Activated CD4-positive, alpha-beta T cell treated with anti-CD3 and anti-CD28 coated beads, Interleukin-2, amount 10 ng/mL, durations not matched to agents 24 days and 14 days (primary cell): ENCODE measurements at regions of chr15 and their contacts with region 1.

Region 1: GRCh38 chr15:43939070-43939469 is 112.3 kb downstream of the WDR76 start:
- DNase-seq: no peak
- H3K4me3 Mint-ChIP-seq: no peak overlapping the region
- H3K27ac Mint-ChIP-seq: no peak overlapping the region
- H3K4me1 Mint-ChIP-seq: no peaks in the 10 kb centered on the region
- H3K27me3 Mint-ChIP-seq: peaks cover 9% of the 10 kb centered on the region

Region 2: DNA sequence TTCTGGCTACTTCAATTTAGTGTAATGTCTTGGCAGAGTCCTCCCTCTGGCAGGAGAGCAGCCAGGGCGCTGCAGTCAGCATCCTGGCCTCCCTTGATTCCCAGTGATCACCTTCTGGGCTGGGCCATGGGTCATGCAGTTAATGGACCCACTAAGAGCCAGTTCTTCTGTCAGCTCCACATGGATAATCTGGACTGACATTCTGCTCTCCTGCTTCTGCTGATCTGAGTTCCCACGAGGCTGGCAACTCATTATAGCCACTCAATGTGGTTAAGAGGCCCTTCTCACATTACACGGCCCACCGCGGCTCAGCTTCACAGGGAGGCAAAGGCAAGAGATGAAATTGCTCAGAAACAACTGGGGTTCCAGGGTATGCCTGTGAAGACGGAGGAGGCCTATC is 18.3 kb before region 1 on chr15:
- intact Hi-C with region 1: no loop called
- DNase-seq: no peak
- H3K4me3 Mint-ChIP-seq: no peak overlapping the region
- H3K27ac Mint-ChIP-seq: no peak overlapping the region
- H3K4me1 Mint-ChIP-seq: peaks cover 2% of the 10 kb centered on the region
- H3K27me3 Mint-ChIP-seq: no peaks in the 10 kb centered on the region

Region 3: GRCh38 chr15:44066316-44066740 is 127.3 kb after region 1 on chr15:
- intact Hi-C with region 1: loop called (anchors 2 kb)
- DNase-seq: peak; percentile 86
- H3K4me3 Mint-ChIP-seq: no peak overlapping the region
- H3K27ac Mint-ChIP-seq: no peak overlapping the region
- H3K4me1 Mint-ChIP-seq: peaks cover 5% of the 10 kb centered on the region
- H3K27me3 Mint-ChIP-seq: peaks cover 27% of the 10 kb centered on the region